Activated naive CD4-positive, alpha-beta T cell treated with anti-CD3 and anti-CD28 coated beads for 36 hours (primary cell): ENCODE measurements at regions of chr1 and their contacts with region 1.

Region 1: GRCh38 chr1:232038706-232039677 is 412.4 kb downstream of the DISC1 start:
- DNase-seq: no peak
- H3K4me3 Mint-ChIP-seq: no peak overlapping the region
- H3K27ac Mint-ChIP-seq: no peak overlapping the region
- H3K4me1 Mint-ChIP-seq: no peaks in the 10 kb centered on the region
- H3K27me3 Mint-ChIP-seq: no peaks in the 10 kb centered on the region

Region 2: GRCh38 chr1:231500666-231501065 is 538.3 kb before region 1 on chr1:
- CTCF ChIA-PET with region 1: no interaction called
- intact Hi-C with region 1: no loop called
- DNase-seq: no peak
- H3K4me3 Mint-ChIP-seq: no peak overlapping the region
- H3K27ac Mint-ChIP-seq: no peak overlapping the region
- H3K4me1 Mint-ChIP-seq: no peaks in the 10 kb centered on the region
- H3K27me3 Mint-ChIP-seq: peaks cover 5% of the 10 kb centered on the region

Region 3: DNA sequence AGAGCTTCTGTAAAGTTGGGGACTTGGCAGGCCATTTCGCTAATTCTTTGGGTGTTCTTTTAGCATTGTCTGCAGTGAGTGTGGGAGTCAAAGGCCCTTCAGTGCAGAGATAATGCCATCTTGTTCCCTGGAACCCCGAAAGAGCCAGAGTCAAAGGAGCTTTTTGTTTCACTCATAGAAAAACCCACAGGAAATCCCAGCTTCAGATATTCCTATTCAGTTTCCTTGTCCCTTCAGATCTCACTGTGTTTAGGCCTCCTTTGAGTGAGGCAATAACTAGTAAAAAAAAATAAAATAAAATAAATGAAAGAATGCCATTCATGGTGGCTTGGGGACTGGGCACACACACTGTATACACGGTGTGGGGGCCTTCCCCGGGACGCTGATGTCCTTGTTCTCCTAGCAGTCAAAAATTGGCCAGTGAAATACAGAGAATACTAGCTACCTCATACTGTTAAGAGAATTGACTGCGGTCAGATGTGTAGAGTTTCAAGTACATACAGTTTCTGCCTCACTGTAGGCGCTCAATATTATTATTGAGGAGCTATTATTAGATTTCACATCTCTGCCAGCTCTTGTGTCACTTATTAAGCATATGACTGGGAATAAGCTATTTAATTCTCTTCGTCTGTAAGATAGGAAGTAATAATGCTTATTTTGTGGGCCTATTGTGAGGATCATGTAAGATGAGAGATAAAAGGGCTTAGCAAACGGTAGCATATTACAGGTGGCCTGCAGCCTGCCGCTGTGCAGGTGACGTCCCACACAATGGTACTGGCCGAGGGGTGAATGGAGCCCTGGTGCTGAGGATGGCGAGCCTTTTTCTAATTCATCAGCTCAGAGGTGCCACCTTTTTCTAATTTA is 395.7 kb before region 1 on chr1:
- CTCF ChIA-PET with region 1: interaction called, 10 read pairs
- intact Hi-C with region 1: no loop called
- DNase-seq: no peak
- H3K4me3 Mint-ChIP-seq: no peak overlapping the region
- H3K27ac Mint-ChIP-seq: no peak overlapping the region
- H3K4me1 Mint-ChIP-seq: peaks cover 18% of the 10 kb centered on the region
- H3K27me3 Mint-ChIP-seq: no peaks in the 10 kb centered on the region